ENCODE measurements at regions of chr7 and their contacts with region 1.

Region 1: GRCh38 chr7:149742075-149742701 is 31.2 kb downstream of the ZNF467 start:
- DNase-seq: peak; percentile 41
- ATAC-seq: peak; percentile 99
- H3K4me3 ChIP-seq: peak overlapping the region; percentile 16; the same call in 1 of the 2 replicates
- H3K27ac ChIP-seq: no peak overlapping the region
- H3K4me1 ChIP-seq: no peaks in the 10 kb centered on the region
- H3K27me3 ChIP-seq: peaks cover 6% of the 10 kb centered on the region; the same call in 1 of the 2 replicates
- CTCF ChIP-seq: peak; percentile 78
- POLR2A ChIP-seq: no peak
- RAD21 ChIP-seq: peak; percentile 78

Region 2: GRCh38 chr7:149409895-149410294 is 332.3 kb before region 1 on chr7:
- CTCF ChIA-PET with region 1: no interaction called
- POLR2A ChIA-PET with region 1: no interaction called
- dilution Hi-C with region 1: no loop called
- in situ Hi-C with region 1: no loop called
- intact Hi-C with region 1: no loop called
- DNase-seq: no peak
- ATAC-seq: no peak
- H3K4me3 ChIP-seq: no peak overlapping the region
- H3K27ac ChIP-seq: no peak overlapping the region
- H3K4me1 ChIP-seq: no peaks in the 10 kb centered on the region
- H3K27me3 ChIP-seq: no peaks in the 10 kb centered on the region
- CTCF ChIP-seq: no peak
- POLR2A ChIP-seq: no peak
- RAD21 ChIP-seq: no peak

Region 3: DNA sequence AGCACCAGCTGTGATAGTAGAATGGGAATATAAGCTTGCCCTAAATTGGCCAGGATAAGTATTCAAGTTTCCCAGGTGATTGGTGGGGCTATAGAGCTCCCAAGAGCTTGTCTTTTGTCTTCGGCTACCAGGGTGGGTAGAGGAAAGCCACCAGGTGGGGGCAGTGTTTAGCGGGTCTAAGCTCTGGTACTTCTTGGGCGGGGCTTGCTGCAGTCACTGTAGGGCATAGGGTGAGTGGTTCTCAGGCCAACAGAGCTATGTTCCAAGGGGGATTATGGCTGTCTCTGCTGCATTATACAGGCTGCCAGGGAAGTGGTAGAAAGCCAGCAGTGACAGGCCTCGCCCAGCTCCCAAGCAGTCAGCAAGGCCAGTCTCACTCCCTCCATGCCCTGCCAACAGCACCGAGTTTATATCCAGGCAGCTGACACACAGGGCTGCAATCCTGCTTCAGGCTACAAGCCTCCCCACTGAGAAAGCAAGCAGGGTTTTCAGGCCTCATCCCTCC is 79.5 kb before region 1 on chr7:
- CTCF ChIA-PET with region 1: interaction called, 11 read pairs
- POLR2A ChIA-PET with region 1: no interaction called
- dilution Hi-C with region 1: no loop called
- in situ Hi-C with region 1: loop called (anchors 10 kb)
- intact Hi-C with region 1: loop called (anchors 1 kb)
- DNase-seq: peak; percentile 44
- ATAC-seq: peak; percentile 91
- H3K4me3 ChIP-seq: no peak overlapping the region
- H3K27ac ChIP-seq: no peak overlapping the region
- H3K4me1 ChIP-seq: no peaks in the 10 kb centered on the region
- H3K27me3 ChIP-seq: peaks cover 2% of the 10 kb centered on the region; the same call in 1 of the 2 replicates
- CTCF ChIP-seq: peak; percentile 55
- POLR2A ChIP-seq: no peak
- RAD21 ChIP-seq: peak; percentile 49

Region 4: GRCh38 chr7:149669121-149669818 is 72.9 kb before region 1 on chr7:
- CTCF ChIA-PET with region 1: interaction called, 10 read pairs
- POLR2A ChIA-PET with region 1: no interaction called
- dilution Hi-C with region 1: no loop called
- in situ Hi-C with region 1: loop called (anchors 10 kb)
- intact Hi-C with region 1: loop called (anchors 1 kb)
- DNase-seq: peak; percentile 19
- ATAC-seq: peak; percentile 29; the same call in 1 of the 2 replicates
- H3K4me3 ChIP-seq: no peak overlapping the region
- H3K27ac ChIP-seq: no peak overlapping the region
- H3K4me1 ChIP-seq: no peaks in the 10 kb centered on the region
- H3K27me3 ChIP-seq: peaks cover 8% of the 10 kb centered on the region
- CTCF ChIP-seq: peak; percentile 44
- POLR2A ChIP-seq: no peak
- RAD21 ChIP-seq: peak; percentile 33; the same call in 1 of the 2 replicates

Region 5: GRCh38 chr7:149707448-149707886 is 34.7 kb before region 1 on chr7:
- CTCF ChIA-PET with region 1: no interaction called
- POLR2A ChIA-PET with region 1: no interaction called
- dilution Hi-C with region 1: no loop called
- in situ Hi-C with region 1: no loop called
- intact Hi-C with region 1: no loop called
- DNase-seq: no peak
- ATAC-seq: peak; percentile 73
- H3K4me3 ChIP-seq: no peak overlapping the region
- H3K27ac ChIP-seq: no peak overlapping the region
- H3K4me1 ChIP-seq: no peaks in the 10 kb centered on the region
- H3K27me3 ChIP-seq: no peaks in the 10 kb centered on the region; the same call in 1 of the 2 replicates
- CTCF ChIP-seq: no peak
- POLR2A ChIP-seq: no peak
- RAD21 ChIP-seq: no peak

Measured in IMR-90 (cell line).